K562 (cell line): ENCODE measurements at regions of chr5 and their contacts with region 1.

Region 1: DNA sequence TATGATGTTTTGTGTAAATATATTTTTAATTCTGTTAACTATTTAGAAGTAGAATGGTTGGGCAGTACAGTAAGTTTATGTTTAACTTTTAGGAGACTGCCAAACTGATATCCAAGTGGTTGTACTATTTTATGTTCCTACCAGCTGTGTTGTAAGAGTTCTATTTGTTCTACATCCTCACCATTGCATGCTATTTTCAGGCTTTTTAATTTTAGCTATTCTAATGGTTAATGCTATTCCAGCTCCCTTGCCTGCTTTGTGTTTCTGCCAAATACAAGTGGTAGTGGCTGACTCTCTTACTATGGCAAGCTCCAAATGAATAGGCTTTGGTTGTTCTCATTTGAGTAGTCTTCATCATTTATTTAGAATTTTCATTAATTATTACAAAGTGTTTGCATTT is 476.4 kb downstream of the KIF4B start:
- DNase-seq: no peak
- ATAC-seq: no peak
- H3K4me3 ChIP-seq: no peak overlapping the region
- H3K27ac ChIP-seq: no peak overlapping the region
- H3K4me1 ChIP-seq: no peaks in the 10 kb centered on the region
- H3K27me3 ChIP-seq: no peaks in the 10 kb centered on the region
- CTCF ChIP-seq: no peak
- EP300 ChIP-seq: no peak
- POLR2A ChIP-seq: no peak
- RAD21 ChIP-seq: no peak

Region 2: GRCh38 chr5:155222393-155222792 is 267.6 kb before region 1 on chr5:
- CTCF ChIA-PET with region 1: no interaction called
- POLR2A ChIA-PET with region 1: no interaction called
- in situ Hi-C with region 1: no loop called
- intact Hi-C with region 1: no loop called
- DNase-seq: no peak
- ATAC-seq: no peak
- H3K4me3 ChIP-seq: no peak overlapping the region
- H3K27ac ChIP-seq: no peak overlapping the region
- H3K4me1 ChIP-seq: no peaks in the 10 kb centered on the region
- H3K27me3 ChIP-seq: no peaks in the 10 kb centered on the region
- CTCF ChIP-seq: no peak
- EP300 ChIP-seq: no peak
- POLR2A ChIP-seq: no peak
- RAD21 ChIP-seq: no peak

Region 3: GRCh38 chr5:155332618-155333017 is 157.3 kb before region 1 on chr5:
- CTCF ChIA-PET with region 1: no interaction called
- POLR2A ChIA-PET with region 1: no interaction called
- in situ Hi-C with region 1: no loop called
- intact Hi-C with region 1: no loop called
- DNase-seq: no peak
- ATAC-seq: no peak
- H3K4me3 ChIP-seq: no peak overlapping the region
- H3K27ac ChIP-seq: no peak overlapping the region
- H3K4me1 ChIP-seq: no peaks in the 10 kb centered on the region
- H3K27me3 ChIP-seq: no peaks in the 10 kb centered on the region
- CTCF ChIP-seq: no peak
- EP300 ChIP-seq: no peak
- POLR2A ChIP-seq: no peak
- RAD21 ChIP-seq: no peak

Region 4: DNA sequence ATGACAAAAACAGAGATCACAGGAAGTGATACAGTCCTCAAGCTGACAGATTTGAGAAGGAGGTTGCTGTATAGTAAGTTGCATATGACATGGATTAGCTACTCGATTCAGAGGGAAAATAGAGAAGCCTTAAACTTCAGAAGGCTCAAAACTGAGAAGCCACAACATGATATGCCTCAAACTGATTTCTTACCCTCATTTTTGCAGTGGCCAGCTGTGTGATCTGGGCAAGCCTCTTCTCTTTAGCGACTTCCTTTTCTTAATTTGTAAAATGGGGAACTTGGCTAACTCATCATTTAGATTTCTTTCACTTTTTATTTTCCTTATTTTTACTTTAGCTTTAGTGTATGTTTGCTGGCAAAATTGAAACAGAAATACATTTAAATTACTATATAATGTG is 55.3 kb before region 1 on chr5:
- CTCF ChIA-PET with region 1: no interaction called
- POLR2A ChIA-PET with region 1: no interaction called
- in situ Hi-C with region 1: loop called (anchors 5 kb)
- intact Hi-C with region 1: no loop called
- DNase-seq: no peak
- ATAC-seq: no peak
- H3K4me3 ChIP-seq: no peak overlapping the region
- H3K27ac ChIP-seq: no peak overlapping the region
- H3K4me1 ChIP-seq: no peaks in the 10 kb centered on the region
- H3K27me3 ChIP-seq: no peaks in the 10 kb centered on the region
- CTCF ChIP-seq: no peak
- EP300 ChIP-seq: no peak
- POLR2A ChIP-seq: no peak
- RAD21 ChIP-seq: no peak